Heart left ventricle (tissue), 16 donors: ENCODE measurements at regions of chr9 and their contacts with region 1.

Region 1: DNA sequence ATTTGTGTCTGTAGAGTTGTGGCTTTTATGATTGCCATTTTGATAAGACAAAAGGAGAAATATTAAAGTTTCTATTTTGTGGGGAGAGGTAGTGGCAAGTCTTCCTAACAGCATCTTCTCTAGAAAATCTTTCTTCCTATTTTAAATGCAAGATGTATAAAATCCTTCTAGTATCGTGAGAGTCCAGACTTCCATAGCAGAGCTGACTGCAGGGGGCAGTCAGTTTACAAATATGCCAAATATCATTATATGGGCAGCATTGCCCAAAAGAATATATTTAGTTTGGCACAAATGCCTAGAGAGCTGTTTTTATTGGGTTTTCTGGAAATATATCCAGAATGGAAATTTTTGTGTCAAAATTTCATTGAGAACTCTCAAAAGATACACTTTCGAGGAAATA is 82.1 kb upstream of the ALDH1A1 start:
- DNase-seq: no peak
- ATAC-seq: no peak
- H3K4me3 ChIP-seq: no peak overlapping the region
- H3K27ac ChIP-seq: no peak overlapping the region
- H3K4me1 ChIP-seq: peaks cover 0 to 18% (median 6%) of the 10 kb centered on the region in 12 donors
- H3K27me3 ChIP-seq: no peaks in the 10 kb centered on the region
- CTCF ChIP-seq: no peak
- POLR2A ChIP-seq: no peak

Region 2: GRCh38 chr9:72856972-72857623 is 177.9 kb before region 1 on chr9:
- intact Hi-C with region 1: loop called in 1 of 10 experiments (anchors 5 kb)
- DNase-seq: peak in 2 of 5 donors; percentile 18 to 23
- ATAC-seq: peak; percentile 55 to 83 (median 70)
- H3K4me3 ChIP-seq: no peak overlapping the region
- H3K27ac ChIP-seq: peak overlapping the region in 2 of 12 donors; percentile 32 to 46
- H3K4me1 ChIP-seq: peaks cover 0 to 30% (median 14%) of the 10 kb centered on the region in 12 donors
- H3K27me3 ChIP-seq: no peaks in the 10 kb centered on the region
- CTCF ChIP-seq: peak; percentile 44 to 81 (median 63)
- POLR2A ChIP-seq: no peak

Region 3: GRCh38 chr9:73081979-73082657 is 47.2 kb after region 1 on chr9:
- intact Hi-C with region 1: no loop called
- DNase-seq: no peak
- ATAC-seq: peak in 1 of 4 donors; percentile 60
- H3K4me3 ChIP-seq: no peak overlapping the region
- H3K27ac ChIP-seq: peak overlapping the region in 1 of 12 donors; percentile 27
- H3K4me1 ChIP-seq: peaks cover 0 to 4% (median 0%) of the 10 kb centered on the region in 12 donors
- H3K27me3 ChIP-seq: peaks cover 0 to 6% (median 0%) of the 10 kb centered on the region in 9 donors
- CTCF ChIP-seq: peak; percentile 54 to 85 (median 76)
- POLR2A ChIP-seq: no peak

Region 4: GRCh38 chr9:73093740-73094379 is 58.9 kb after region 1 on chr9:
- intact Hi-C with region 1: no loop called
- DNase-seq: no peak
- ATAC-seq: peak in 1 of 4 donors; percentile 41
- H3K4me3 ChIP-seq: peak overlapping the region in 9 of 12 donors; percentile 9 to 42 (median 25)
- H3K27ac ChIP-seq: peak overlapping the region in 1 of 12 donors; percentile 20
- H3K4me1 ChIP-seq: peaks cover 0 to 6% (median 0%) of the 10 kb centered on the region in 12 donors
- H3K27me3 ChIP-seq: no peaks in the 10 kb centered on the region
- CTCF ChIP-seq: no peak
- POLR2A ChIP-seq: no peak